ENCODE measurements at regions of chr16 and their contacts with region 1.

Region 1: DNA sequence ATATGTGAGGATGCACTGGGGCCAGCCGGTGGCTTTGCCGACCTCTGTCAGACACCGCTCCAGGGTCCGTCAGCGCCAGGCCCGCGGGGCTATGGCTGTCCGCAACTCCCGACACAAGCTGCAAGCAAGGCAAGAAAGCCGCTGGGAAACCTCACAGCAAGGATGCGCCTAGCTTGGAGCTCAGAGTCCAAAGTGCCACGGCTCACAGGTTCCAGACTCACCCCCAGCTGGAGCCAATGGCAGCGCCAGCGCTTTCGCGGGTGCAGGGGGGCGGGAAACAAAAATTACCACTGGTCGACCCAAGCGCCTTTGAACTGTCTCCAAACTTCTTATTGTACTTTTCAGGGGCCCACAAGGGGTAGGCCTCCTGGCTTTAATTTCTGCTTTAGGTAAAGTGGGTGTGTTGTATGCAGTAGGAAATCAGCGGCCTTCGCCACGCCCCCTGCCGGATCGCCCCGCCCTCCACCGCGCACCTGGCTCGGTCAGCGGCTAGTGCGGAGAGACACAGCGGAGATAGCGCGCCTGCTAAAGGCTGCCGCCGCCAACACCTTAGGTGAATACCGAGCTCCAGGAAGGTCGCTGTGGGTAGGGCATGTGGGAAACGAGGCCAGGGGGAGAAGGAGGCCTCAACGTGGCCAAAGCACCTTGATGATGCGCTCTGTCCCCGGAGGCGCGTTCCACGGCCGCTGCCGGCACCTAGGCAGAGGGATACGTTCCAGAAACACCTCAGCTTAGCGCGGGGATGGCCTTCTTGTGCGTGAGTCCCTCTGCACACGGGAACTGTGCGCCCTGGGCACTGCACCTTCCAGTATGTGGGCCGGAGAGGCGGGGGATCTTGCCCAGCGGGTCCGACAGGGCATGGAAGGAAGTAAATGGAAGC is 61.0 kb upstream of the RBL2 start:
- DNase-seq: peak; percentile 64 to 87 (median 84)
- ATAC-seq: peak; percentile 96
- H3K4me3 ChIP-seq: peak overlapping the region; percentile 84
- H3K4me3 Mint-ChIP-seq: peak overlapping the region in 1 of 10 donors; percentile 86
- H3K27ac ChIP-seq: peak overlapping the region; percentile 67
- H3K27ac Mint-ChIP-seq: peak overlapping the region in 8 of 9 donors; percentile 48 to 95 (median 88)
- H3K4me1 ChIP-seq: peaks cover 4 to 7% of the 10 kb centered on the region in 2 donors
- H3K4me1 Mint-ChIP-seq: peaks cover 11 to 44% (median 20%) of the 10 kb centered on the region in 7 donors
- H3K27me3 ChIP-seq: no peaks in the 10 kb centered on the region
- H3K27me3 Mint-ChIP-seq: peaks cover 0 to 32% (median 0%) of the 10 kb centered on the region in 5 donors

Region 2: GRCh38 chr16:53007095-53007494 is 366.1 kb before region 1 on chr16:
- CTCF ChIA-PET with region 1: no interaction called
- POLR2A ChIA-PET with region 1: no interaction called
- intact Hi-C with region 1: no loop called
- DNase-seq: no peak
- ATAC-seq: no peak
- H3K4me3 ChIP-seq: no peak overlapping the region
- H3K4me3 Mint-ChIP-seq: no peak overlapping the region
- H3K27ac ChIP-seq: no peak overlapping the region
- H3K27ac Mint-ChIP-seq: no peak overlapping the region
- H3K4me1 ChIP-seq: no peaks in the 10 kb centered on the region
- H3K4me1 Mint-ChIP-seq: no peaks in the 10 kb centered on the region
- H3K27me3 ChIP-seq: no peaks in the 10 kb centered on the region
- H3K27me3 Mint-ChIP-seq: peaks cover 5 to 33% (median 29%) of the 10 kb centered on the region in 5 donors

Region 3: GRCh38 chr16:53257001-53257400 is 116.2 kb before region 1 on chr16:
- CTCF ChIA-PET with region 1: no interaction called
- POLR2A ChIA-PET with region 1: no interaction called
- intact Hi-C with region 1: no loop called
- DNase-seq: no peak
- ATAC-seq: no peak
- H3K4me3 ChIP-seq: no peak overlapping the region
- H3K4me3 Mint-ChIP-seq: no peak overlapping the region
- H3K27ac ChIP-seq: no peak overlapping the region
- H3K27ac Mint-ChIP-seq: no peak overlapping the region
- H3K4me1 ChIP-seq: no peaks in the 10 kb centered on the region
- H3K4me1 Mint-ChIP-seq: no peaks in the 10 kb centered on the region
- H3K27me3 ChIP-seq: no peaks in the 10 kb centered on the region
- H3K27me3 Mint-ChIP-seq: no peaks in the 10 kb centered on the region

Region 4: DNA sequence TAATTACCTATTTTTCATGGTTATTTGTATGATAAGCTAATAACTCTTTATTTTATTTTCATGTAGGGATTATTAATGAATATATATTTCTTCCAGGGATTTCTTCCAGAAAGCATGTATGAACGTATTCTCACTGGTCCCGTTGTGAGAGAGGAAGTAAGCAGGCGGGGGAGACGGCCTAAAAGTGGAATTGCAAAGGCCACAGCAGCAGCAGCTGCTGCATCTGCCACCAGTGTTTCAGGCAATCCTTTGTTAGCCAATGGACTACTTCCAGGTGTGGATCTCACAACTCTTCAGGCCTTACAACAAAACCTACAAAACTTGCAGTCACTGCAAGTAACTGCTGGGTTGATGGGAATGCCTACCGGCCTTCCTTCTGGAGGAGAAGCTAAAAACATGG is 49.3 kb before region 1 on chr16:
- CTCF ChIA-PET with region 1: no interaction called
- POLR2A ChIA-PET with region 1: no interaction called
- intact Hi-C with region 1: loop called in 1 of 2 experiments (anchors 10 kb)
- DNase-seq: no peak
- ATAC-seq: no peak
- H3K4me3 ChIP-seq: no peak overlapping the region
- H3K4me3 Mint-ChIP-seq: no peak overlapping the region
- H3K27ac ChIP-seq: no peak overlapping the region
- H3K27ac Mint-ChIP-seq: peak overlapping the region in 1 of 9 donors; percentile 21
- H3K4me1 ChIP-seq: no peaks in the 10 kb centered on the region
- H3K4me1 Mint-ChIP-seq: peaks cover 0 to 1% (median 0%) of the 10 kb centered on the region in 7 donors
- H3K27me3 ChIP-seq: no peaks in the 10 kb centered on the region
- H3K27me3 Mint-ChIP-seq: no peaks in the 10 kb centered on the region

Region 5: GRCh38 chr16:53626811-53627210 is 253.6 kb after region 1 on chr16:
- CTCF ChIA-PET with region 1: no interaction called
- POLR2A ChIA-PET with region 1: no interaction called
- intact Hi-C with region 1: no loop called
- DNase-seq: no peak
- ATAC-seq: no peak
- H3K4me3 ChIP-seq: no peak overlapping the region
- H3K4me3 Mint-ChIP-seq: no peak overlapping the region
- H3K27ac ChIP-seq: no peak overlapping the region
- H3K27ac Mint-ChIP-seq: no peak overlapping the region
- H3K4me1 ChIP-seq: no peaks in the 10 kb centered on the region
- H3K4me1 Mint-ChIP-seq: no peaks in the 10 kb centered on the region
- H3K27me3 ChIP-seq: no peaks in the 10 kb centered on the region
- H3K27me3 Mint-ChIP-seq: no peaks in the 10 kb centered on the region